ENCODE measurements at regions of chr17 and their contacts with region 1.

Region 1: DNA sequence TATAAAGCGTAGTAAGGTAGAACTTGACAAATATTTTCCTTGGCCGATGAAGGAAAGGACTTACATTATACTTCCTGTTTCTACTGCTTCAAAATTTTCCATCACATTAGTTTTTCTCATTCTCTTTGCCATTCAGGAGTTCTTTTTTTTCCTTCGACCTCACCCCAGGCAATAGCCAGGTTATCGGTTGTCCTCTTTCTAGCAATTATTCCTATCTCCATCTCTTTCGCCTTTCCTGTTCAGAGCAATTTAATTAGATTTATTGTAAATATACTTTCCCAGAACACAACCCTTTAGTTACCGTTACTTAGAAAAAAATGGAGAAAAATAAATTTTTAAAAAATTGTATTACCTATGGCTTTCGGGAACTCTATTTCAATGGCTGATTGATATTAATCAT is 205.2 kb downstream of the KCNJ2 start:
- DNase-seq: no peak
- H3K27ac ChIP-seq: no peak overlapping the region
- CTCF ChIP-seq: no peak

Region 2: DNA sequence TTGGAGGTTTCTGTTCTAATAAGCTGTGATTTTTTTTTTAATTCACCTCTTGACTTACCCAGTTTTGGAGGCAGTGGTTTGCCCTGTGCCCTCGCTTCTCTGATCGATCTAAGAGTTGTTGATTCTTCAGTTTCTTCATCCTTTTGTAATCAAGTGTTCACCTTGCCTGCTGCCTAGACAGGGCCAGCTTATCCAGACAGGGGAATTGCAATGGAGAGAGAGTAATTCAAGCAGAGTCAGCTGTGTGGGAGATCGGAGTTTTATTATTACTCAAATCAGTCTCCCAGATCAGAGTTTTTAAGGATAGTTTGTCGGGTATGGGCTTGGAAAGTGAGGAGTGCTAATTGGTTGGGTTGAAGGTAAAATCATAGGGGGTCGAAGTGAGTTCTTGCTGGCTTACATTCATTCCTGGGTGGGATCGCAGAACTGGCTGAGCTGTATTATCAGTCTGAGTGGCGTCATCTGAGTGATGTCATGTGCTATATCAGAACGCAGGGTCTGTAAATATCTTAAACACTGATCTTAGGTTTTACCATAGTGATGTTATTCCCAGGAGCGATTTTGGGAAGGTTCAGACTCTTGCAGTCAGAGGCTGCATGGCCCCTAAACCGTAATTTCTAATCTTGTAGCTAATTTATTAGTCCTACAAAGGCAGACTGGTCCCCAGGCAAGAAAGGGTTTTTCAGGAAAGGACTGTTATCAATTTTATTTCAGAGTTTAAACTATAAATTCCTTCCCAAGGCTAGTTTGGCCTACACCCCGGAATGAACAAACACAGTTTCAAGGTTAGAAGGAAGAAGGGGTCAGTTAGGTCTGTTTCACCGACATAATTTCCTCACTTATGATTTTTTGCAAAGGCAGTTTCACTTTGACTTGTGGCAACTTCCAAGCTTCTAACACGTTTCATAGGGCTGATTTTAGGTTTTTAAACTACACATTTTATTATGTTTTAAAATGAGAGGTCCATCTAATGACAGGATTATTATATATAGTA is 321.0 kb before region 1 on chr17:
- CTCF ChIA-PET with region 1: interaction called, 10 read pairs
- POLR2A ChIA-PET with region 1: no interaction called
- DNase-seq: no peak
- H3K27ac ChIP-seq: no peak overlapping the region
- CTCF ChIP-seq: no peak

Region 3: DNA sequence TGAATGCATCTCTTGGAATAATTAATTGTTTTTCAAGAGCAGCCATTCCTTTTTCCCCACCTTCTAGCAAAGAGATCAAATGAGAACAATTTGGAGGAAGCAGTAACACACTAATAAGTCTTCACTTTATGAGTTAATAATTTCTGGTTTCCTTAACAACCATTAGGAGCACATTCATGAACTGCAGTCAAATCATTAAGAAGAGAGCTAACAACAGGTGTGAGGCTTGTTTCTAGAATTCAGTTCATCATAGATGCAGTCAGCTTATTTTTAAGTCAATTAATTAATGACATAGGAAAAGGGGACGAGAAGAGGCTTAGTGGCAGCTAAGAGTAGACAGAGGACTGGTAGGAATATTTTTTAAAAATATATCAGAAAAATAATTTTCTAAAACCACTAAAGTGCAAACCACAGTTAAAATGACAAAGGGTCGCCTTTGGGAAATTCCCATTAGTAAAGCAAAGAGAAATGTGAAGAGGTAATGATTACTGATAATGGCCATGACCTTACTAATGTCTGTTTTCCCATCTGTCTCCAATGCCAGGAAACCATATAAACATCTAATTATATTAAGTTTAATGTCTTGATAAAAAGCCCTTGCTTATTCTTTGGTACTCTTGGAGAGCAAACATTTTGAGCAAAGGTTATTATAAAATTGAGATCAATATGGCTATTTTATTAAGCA is 20.9 kb before region 1 on chr17:
- CTCF ChIA-PET with region 1: no interaction called
- POLR2A ChIA-PET with region 1: no interaction called
- DNase-seq: no peak
- H3K27ac ChIP-seq: no peak overlapping the region
- CTCF ChIP-seq: no peak

Region 4: GRCh38 chr17:70388326-70388725 is 13.8 kb after region 1 on chr17:
- CTCF ChIA-PET with region 1: no interaction called
- POLR2A ChIA-PET with region 1: no interaction called
- DNase-seq: no peak
- H3K27ac ChIP-seq: no peak overlapping the region
- CTCF ChIP-seq: no peak